Endothelial cell of umbilical vein (primary cell): ENCODE measurements at regions of chr6 and their contacts with region 1.

Region 1: DNA sequence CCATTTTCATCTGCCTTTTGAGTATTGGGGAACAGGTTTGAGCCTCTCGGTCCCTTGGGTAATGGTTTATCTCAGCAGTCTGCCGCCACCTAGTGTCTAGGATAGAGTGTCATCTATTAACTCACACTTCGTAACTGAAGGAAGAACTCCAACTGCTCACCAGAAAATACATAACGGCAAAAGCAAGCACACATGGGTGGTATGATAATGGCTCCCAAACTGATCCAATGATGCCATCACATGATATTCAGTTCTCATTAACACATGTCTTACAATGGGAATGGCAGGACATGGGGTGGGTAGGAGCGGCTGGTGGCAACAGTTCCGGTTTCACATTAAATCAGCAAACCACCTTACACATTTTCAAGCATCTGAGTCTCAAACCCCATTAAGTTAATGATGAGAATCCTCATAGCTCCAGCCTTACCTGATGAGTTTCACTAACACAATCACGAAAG is 110.7 kb upstream of the PHACTR1 start:
- DNase-seq: peak; percentile 81
- H3K4me3 ChIP-seq: no peak overlapping the region
- H3K27ac ChIP-seq: no peak overlapping the region
- H3K4me1 ChIP-seq: peaks cover 42% of the 10 kb centered on the region
- H3K27me3 ChIP-seq: no peaks in the 10 kb centered on the region
- CTCF ChIP-seq: peak; percentile 58 to 61
- POLR2A ChIP-seq: no peak

Region 2: GRCh38 chr6:11700118-11700718 is 905.7 kb before region 1 on chr6:
- CTCF ChIA-PET with region 1: no interaction called
- POLR2A ChIA-PET with region 1: no interaction called
- dilution Hi-C with region 1: no loop called
- intact Hi-C with region 1: loop called (anchors 2 kb)
- DNase-seq: peak; percentile 47
- H3K4me3 ChIP-seq: no peak overlapping the region
- H3K27ac ChIP-seq: no peak overlapping the region
- H3K4me1 ChIP-seq: no peaks in the 10 kb centered on the region
- H3K27me3 ChIP-seq: no peaks in the 10 kb centered on the region
- CTCF ChIP-seq: peak in 1 of 2 donors; percentile 16
- POLR2A ChIP-seq: no peak

Region 3: GRCh38 chr6:12083763-12084162 is 522.2 kb before region 1 on chr6:
- CTCF ChIA-PET with region 1: no interaction called
- POLR2A ChIA-PET with region 1: no interaction called
- dilution Hi-C with region 1: no loop called
- intact Hi-C with region 1: no loop called
- DNase-seq: no peak
- H3K4me3 ChIP-seq: no peak overlapping the region
- H3K27ac ChIP-seq: no peak overlapping the region
- H3K4me1 ChIP-seq: no peaks in the 10 kb centered on the region
- H3K27me3 ChIP-seq: no peaks in the 10 kb centered on the region
- CTCF ChIP-seq: no peak
- POLR2A ChIP-seq: no peak

Region 4: GRCh38 chr6:12150812-12151432 is 455.0 kb before region 1 on chr6:
- CTCF ChIA-PET with region 1: no interaction called
- POLR2A ChIA-PET with region 1: no interaction called
- dilution Hi-C with region 1: no loop called
- intact Hi-C with region 1: loop called (anchors 2 kb)
- DNase-seq: no peak
- H3K4me3 ChIP-seq: no peak overlapping the region
- H3K27ac ChIP-seq: no peak overlapping the region
- H3K4me1 ChIP-seq: peaks cover 24% of the 10 kb centered on the region
- H3K27me3 ChIP-seq: no peaks in the 10 kb centered on the region
- CTCF ChIP-seq: peak in 1 of 2 donors; percentile 28
- POLR2A ChIP-seq: no peak

Region 5: GRCh38 chr6:12296255-12296573 is 309.7 kb before region 1 on chr6:
- CTCF ChIA-PET with region 1: interaction called, 203 read pairs
- POLR2A ChIA-PET with region 1: interaction called, 39 read pairs
- dilution Hi-C with region 1: no loop called
- intact Hi-C with region 1: loop called (anchors 1 kb)
- DNase-seq: peak; percentile 53
- H3K4me3 ChIP-seq: peak overlapping the region in 2 of 3 experiments; percentile 91 to 96
- H3K27ac ChIP-seq: peak overlapping the region; percentile 98
- H3K4me1 ChIP-seq: peaks cover 30% of the 10 kb centered on the region
- H3K27me3 ChIP-seq: no peaks in the 10 kb centered on the region
- CTCF ChIP-seq: no peak
- POLR2A ChIP-seq: no peak

Region 6: DNA sequence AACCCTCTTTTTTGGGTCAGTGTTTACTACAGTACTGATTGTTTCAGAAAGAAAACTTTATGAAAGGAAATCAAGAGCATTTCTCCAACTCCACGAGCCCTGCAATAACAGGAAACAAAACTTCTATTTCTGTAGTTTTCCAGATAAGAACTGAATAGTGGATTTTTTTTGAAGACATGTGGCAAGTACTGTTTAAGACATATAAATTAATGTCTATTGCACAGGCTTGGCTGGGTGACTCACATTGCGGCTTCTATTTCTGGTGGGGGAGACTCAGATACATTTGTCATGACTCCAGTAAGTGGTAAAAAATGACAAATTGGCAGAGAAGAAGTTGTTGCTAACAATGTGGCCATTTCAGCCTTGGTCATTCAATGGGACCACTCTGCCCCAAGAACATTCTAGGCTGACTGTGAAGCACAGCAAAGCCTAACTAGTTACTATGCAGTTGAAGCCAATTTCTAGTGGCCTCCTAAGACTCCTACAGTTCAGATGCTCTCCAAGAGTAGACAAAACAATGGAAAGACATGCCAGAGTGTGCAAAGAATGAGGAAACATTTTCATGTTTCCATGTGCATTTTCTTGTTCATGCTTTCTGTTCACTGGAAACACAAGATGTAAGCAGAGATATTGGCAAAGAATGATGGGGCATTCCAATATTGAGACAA is 114.9 kb before region 1 on chr6:
- CTCF ChIA-PET with region 1: interaction called, 58 read pairs
- POLR2A ChIA-PET with region 1: no interaction called
- dilution Hi-C with region 1: no loop called
- intact Hi-C with region 1: loop called (anchors 2 kb)
- DNase-seq: peak; percentile 96
- H3K4me3 ChIP-seq: no peak overlapping the region
- H3K27ac ChIP-seq: peak overlapping the region; percentile 93
- H3K4me1 ChIP-seq: peaks cover 39% of the 10 kb centered on the region
- H3K27me3 ChIP-seq: no peaks in the 10 kb centered on the region
- CTCF ChIP-seq: no peak
- POLR2A ChIP-seq: no peak

Region 7: DNA sequence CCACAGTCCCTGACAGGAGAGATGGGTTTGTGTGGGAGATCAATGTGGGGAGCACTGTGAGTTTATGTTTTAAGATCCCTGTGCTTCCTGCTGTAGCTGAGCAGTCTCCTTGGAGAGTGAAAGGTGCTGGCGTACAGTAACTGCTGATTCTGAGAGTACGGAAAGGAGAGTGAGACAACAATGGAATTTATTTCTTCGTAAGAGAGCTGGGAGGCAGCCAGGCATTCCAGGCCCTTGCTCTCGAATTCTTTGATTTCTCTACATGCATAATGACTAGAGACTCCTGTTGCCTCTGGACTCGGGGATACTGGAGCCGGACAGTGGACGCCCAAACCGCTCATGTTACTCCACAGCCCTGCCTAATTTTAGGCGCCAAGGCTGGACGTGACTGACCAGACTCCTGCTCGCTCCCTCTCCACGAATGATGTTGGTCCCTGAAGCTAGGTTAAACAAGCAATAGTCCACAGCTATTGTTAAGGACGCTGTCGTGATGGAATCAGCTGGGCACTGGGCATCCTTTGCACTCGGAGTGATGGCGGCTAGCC is 20.3 kb before region 1 on chr6:
- CTCF ChIA-PET with region 1: interaction called, 18 read pairs
- POLR2A ChIA-PET with region 1: interaction called, 13 read pairs
- dilution Hi-C with region 1: no loop called
- intact Hi-C with region 1: loop called (anchors 1 kb)
- DNase-seq: peak; percentile 96
- H3K4me3 ChIP-seq: peak overlapping the region in 1 of 3 experiments; percentile 25
- H3K27ac ChIP-seq: peak overlapping the region; percentile 100
- H3K4me1 ChIP-seq: peaks cover 51% of the 10 kb centered on the region
- H3K27me3 ChIP-seq: no peaks in the 10 kb centered on the region
- CTCF ChIP-seq: no peak
- POLR2A ChIP-seq: peak; percentile 49

Region 8: GRCh38 chr6:13336553-13336952 is 730.6 kb after region 1 on chr6:
- CTCF ChIA-PET with region 1: no interaction called
- POLR2A ChIA-PET with region 1: no interaction called
- dilution Hi-C with region 1: no loop called
- intact Hi-C with region 1: no loop called
- DNase-seq: peak; percentile 85
- H3K4me3 ChIP-seq: no peak overlapping the region
- H3K27ac ChIP-seq: no peak overlapping the region
- H3K4me1 ChIP-seq: peaks cover 13% of the 10 kb centered on the region
- H3K27me3 ChIP-seq: no peaks in the 10 kb centered on the region
- CTCF ChIP-seq: peak; percentile 82 to 85
- POLR2A ChIP-seq: no peak